Natural killer cell (primary cell): ENCODE measurements at regions of chr6 and their contacts with region 1.

Region 1: GRCh38 chr6:170529839-170530469 is 23.2 kb downstream of the PSMB1 start:
- DNase-seq: peak; percentile 69 to 82
- ATAC-seq: peak; percentile 73 to 92 (median 89)
- H3K4me3 ChIP-seq: no peak overlapping the region
- H3K4me3 Mint-ChIP-seq: no peak overlapping the region
- H3K27ac ChIP-seq: no peak overlapping the region
- H3K27ac Mint-ChIP-seq: no peak overlapping the region
- H3K4me1 ChIP-seq: no peaks in the 10 kb centered on the region
- H3K4me1 Mint-ChIP-seq: peaks cover 0 to 4% of the 10 kb centered on the region in 2 donors
- H3K27me3 ChIP-seq: peaks cover 2% of the 10 kb centered on the region
- H3K27me3 Mint-ChIP-seq: no peaks in the 10 kb centered on the region
- CTCF ChIP-seq: peak; percentile 88

Region 2: DNA sequence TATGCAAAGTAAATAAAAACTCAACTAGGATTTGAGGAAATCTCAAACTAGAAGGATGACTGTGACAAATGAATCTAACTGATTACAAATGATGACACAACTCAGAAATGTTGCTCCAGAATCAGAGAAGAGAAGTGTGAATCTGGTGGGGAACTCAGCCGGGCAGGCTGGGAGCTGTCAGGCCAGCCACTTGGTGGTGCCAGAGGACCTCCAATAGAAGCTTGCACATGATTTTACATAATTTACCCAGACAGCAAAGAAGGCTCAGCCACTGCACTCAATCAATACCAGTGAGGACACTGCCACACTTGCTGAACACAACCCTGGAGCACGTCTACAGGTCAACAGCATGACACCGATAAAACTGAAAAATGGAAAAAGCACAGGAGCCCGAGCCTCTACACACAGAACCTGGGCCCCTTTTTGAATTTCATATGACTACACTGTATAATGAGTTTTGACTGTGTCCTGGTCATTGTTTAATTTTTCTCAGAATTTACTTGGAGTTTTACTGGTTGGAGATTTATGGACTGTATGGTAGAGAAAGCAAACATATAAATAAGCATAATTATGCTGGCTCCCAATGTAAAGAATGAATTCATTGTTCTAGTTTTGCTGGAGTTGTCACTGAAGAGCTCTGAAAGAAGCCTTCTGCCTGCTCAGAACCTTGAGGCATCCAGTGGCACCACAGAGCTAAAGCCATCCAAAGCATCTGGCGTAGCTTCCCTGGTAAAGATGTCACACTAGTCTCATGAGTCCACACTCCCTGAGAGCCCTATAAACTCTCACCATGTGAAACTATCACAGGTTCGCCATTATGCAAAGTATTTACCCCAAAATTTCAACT is 1572.8 kb before region 1 on chr6:
- intact Hi-C with region 1: loop called (anchors 10 kb)
- DNase-seq: peak; percentile 44 to 66
- ATAC-seq: peak; percentile 49 to 93 (median 84)
- H3K4me3 ChIP-seq: no peak overlapping the region
- H3K4me3 Mint-ChIP-seq: no peak overlapping the region
- H3K27ac ChIP-seq: no peak overlapping the region
- H3K27ac Mint-ChIP-seq: peak overlapping the region; percentile 6 to 81
- H3K4me1 ChIP-seq: no peaks in the 10 kb centered on the region
- H3K4me1 Mint-ChIP-seq: peaks cover 12 to 13% of the 10 kb centered on the region in 2 donors
- H3K27me3 ChIP-seq: no peaks in the 10 kb centered on the region
- H3K27me3 Mint-ChIP-seq: peaks cover 4 to 12% of the 10 kb centered on the region in 2 donors
- CTCF ChIP-seq: peak; percentile 68

Region 3: DNA sequence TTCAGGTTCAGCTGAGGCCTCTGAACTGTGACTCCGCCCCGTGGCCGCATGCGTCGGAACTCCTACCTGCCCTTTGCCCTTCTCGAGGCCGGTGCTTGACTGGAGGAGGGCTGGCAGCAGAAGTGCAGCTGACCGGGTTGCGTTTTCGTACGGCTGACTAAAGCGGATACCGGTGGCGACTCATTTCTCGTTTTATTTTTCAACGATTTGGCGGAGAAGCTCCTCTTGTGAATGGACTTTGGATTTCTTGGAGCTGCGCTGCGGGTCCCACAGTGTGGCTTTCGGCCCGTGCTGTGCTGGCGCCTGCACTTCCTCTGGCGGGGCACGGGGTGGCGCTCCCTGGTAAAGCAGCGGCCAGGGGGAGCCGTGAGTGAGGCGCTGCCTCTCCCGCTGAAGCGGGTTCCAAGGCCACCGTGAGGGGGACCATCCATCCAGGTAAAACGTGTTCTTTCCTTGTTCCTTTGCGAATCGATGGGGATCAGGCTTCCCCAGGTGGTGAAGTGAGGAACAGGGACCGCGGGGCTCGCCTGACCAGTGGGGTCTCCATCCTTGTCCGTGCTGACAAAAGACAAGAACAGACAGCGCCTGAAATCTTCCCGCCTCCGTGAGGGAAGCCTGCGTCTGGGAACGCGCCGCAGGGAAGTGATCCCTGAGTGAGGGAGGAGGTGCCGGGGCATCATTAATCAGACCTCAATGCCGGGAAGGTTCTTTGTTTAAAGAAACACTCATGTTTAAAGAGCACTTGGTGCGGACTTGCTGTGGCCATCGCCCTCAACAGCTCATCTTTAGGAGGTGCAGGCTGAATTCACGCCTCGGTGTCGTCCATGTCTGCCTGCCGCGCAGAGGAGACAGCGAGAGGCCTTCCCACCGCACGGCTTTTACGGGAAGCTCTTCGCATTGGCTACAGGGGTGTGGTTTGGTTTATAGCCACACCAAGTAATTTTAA is 739.7 kb before region 1 on chr6:
- intact Hi-C with region 1: loop called (anchors 1 kb)
- DNase-seq: peak; percentile 68 to 81
- ATAC-seq: peak; percentile 94 to 98 (median 98)
- H3K4me3 ChIP-seq: peak overlapping the region; percentile 34
- H3K4me3 Mint-ChIP-seq: peak overlapping the region; percentile 84
- H3K27ac ChIP-seq: no peak overlapping the region
- H3K27ac Mint-ChIP-seq: peak overlapping the region in 1 of 2 donors; percentile 20
- H3K4me1 ChIP-seq: peaks cover 13% of the 10 kb centered on the region
- H3K4me1 Mint-ChIP-seq: peaks cover 15 to 18% of the 10 kb centered on the region in 2 donors
- H3K27me3 ChIP-seq: peaks cover 11% of the 10 kb centered on the region
- H3K27me3 Mint-ChIP-seq: peaks cover 39 to 48% of the 10 kb centered on the region in 2 donors
- CTCF ChIP-seq: peak; percentile 96

Region 4: GRCh38 chr6:169831450-169832246 is 698.3 kb before region 1 on chr6:
- intact Hi-C with region 1: loop called (anchors 1 kb)
- DNase-seq: peak; percentile 69 to 81
- ATAC-seq: peak; percentile 73 to 87 (median 86)
- H3K4me3 ChIP-seq: no peak overlapping the region
- H3K4me3 Mint-ChIP-seq: no peak overlapping the region
- H3K27ac ChIP-seq: no peak overlapping the region
- H3K27ac Mint-ChIP-seq: no peak overlapping the region
- H3K4me1 ChIP-seq: peaks cover 7% of the 10 kb centered on the region
- H3K4me1 Mint-ChIP-seq: peaks cover 11 to 17% of the 10 kb centered on the region in 2 donors
- H3K27me3 ChIP-seq: peaks cover 8% of the 10 kb centered on the region
- H3K27me3 Mint-ChIP-seq: peaks cover 53 to 69% of the 10 kb centered on the region in 2 donors
- CTCF ChIP-seq: peak; percentile 97

Region 5: GRCh38 chr6:169950558-169950957 is 579.4 kb before region 1 on chr6:
- intact Hi-C with region 1: loop called (anchors 1 kb)
- DNase-seq: peak; percentile 37 to 68
- ATAC-seq: peak in 2 of 3 donors; percentile 40 to 64
- H3K4me3 ChIP-seq: no peak overlapping the region
- H3K4me3 Mint-ChIP-seq: no peak overlapping the region
- H3K27ac ChIP-seq: no peak overlapping the region
- H3K27ac Mint-ChIP-seq: no peak overlapping the region
- H3K4me1 ChIP-seq: no peaks in the 10 kb centered on the region
- H3K4me1 Mint-ChIP-seq: no peaks in the 10 kb centered on the region
- H3K27me3 ChIP-seq: no peaks in the 10 kb centered on the region
- H3K27me3 Mint-ChIP-seq: peaks cover 10 to 11% of the 10 kb centered on the region in 2 donors
- CTCF ChIP-seq: peak; percentile 53